ENCODE measurements at regions of chr16 and their contacts with region 1.

Region 1: GRCh38 chr16:4734063-4734729 is at the starts of genes ANKS3 and DNAAF8:
- DNase-seq: peak; percentile 57 to 90 (median 72)
- ATAC-seq: peak; percentile 76
- H3K4me3 ChIP-seq: peak within 1 kb of the TSS; percentile 99
- H3K4me3 Mint-ChIP-seq: peak within 1 kb of the TSS; percentile 98
- H3K27ac ChIP-seq: peak within 1 kb of the TSS; percentile 68 to 85
- H3K27ac Mint-ChIP-seq: peak within 1 kb of the TSS; percentile 90
- H3K4me1 ChIP-seq: peaks cover 21% of the 10 kb centered on the region
- H3K4me1 Mint-ChIP-seq: peaks cover 31% of the 10 kb centered on the region
- H3K27me3 ChIP-seq: no peaks in the 10 kb centered on the region
- H3K27me3 Mint-ChIP-seq: no peaks in the 10 kb centered on the region
- CTCF ChIP-seq: no peak
- total RNA-seq, gene ANKS3: 13.5 TPM
- total RNA-seq, gene DNAAF8: 0.25 TPM in 1 of 2 experiments, not detected in the other

Region 2: GRCh38 chr16:4766874-4767628 is 32.9 kb after region 1 on chr16 and contains the start of gene ZNF500:
- CTCF ChIA-PET with region 1: no interaction called
- POLR2A ChIA-PET with region 1: interaction called, 61 read pairs
- intact Hi-C with region 1: loop called (anchors 1 to 2 kb)
- DNase-seq: peak; percentile 90 to 99 (median 96)
- ATAC-seq: peak; percentile 90
- H3K4me3 ChIP-seq: peak within 1 kb of the TSS; percentile 80
- H3K4me3 Mint-ChIP-seq: peak within 1 kb of the TSS; percentile 96
- H3K27ac ChIP-seq: peak within 1 kb of the TSS; percentile 52 to 69
- H3K27ac Mint-ChIP-seq: peak within 1 kb of the TSS; percentile 90
- H3K4me1 ChIP-seq: peaks cover 41% of the 10 kb centered on the region
- H3K4me1 Mint-ChIP-seq: peaks cover 32% of the 10 kb centered on the region
- H3K27me3 ChIP-seq: no peaks in the 10 kb centered on the region
- H3K27me3 Mint-ChIP-seq: no peaks in the 10 kb centered on the region
- CTCF ChIP-seq: no peak
- total RNA-seq, gene ZNF500: 11.8 to 12.4 TPM

Region 3: DNA sequence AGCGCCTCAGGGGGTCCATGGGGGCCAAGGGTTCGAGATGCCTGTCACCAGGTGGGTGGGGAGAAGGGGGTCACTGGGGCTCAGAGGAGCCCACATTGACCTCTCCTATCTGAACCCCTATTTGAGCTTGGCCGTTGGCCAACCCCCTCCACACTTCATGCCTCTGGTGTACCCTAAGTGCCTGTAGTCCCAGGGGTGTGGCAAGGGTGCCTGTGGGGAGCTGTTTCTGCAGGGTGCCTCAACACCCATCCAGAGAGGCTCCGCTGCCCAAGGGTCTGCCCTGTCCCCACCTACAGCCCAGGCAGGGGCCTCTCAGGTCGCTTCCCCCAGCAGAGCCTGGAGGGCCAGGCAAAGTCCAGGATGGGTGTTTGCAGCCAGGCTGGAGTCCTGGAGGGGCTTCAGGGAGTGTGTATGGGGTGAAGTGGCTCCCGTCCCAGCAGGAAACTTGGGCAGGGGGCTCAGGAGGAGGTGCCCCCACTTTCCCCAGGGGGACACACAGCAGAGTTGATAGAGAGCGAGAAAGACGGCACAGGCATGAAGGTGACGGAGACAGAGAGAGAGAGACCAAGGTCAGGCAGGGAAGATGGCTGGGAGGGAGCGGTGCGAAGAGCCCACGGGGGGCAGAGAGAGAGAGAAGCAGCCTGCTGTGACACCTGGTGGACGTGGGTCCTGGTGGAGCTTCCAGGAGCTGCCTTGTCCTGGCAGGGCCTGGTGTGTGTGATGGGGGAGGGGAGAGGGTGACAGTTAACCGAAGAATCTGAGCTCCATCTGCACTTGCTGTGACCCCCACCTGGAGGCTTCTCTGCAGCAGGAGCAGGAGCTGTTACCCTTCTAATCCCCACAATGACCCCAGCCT is 53.7 kb after region 1 on chr16 and contains the start of gene SEPTIN12:
- CTCF ChIA-PET with region 1: no interaction called
- POLR2A ChIA-PET with region 1: no interaction called
- intact Hi-C with region 1: no loop called
- DNase-seq: no peak
- ATAC-seq: no peak
- H3K4me3 ChIP-seq: no peak within 1 kb of the TSS
- H3K4me3 Mint-ChIP-seq: no peak within 1 kb of the TSS
- H3K27ac ChIP-seq: no peak within 1 kb of the TSS
- H3K27ac Mint-ChIP-seq: no peak within 1 kb of the TSS
- H3K4me1 ChIP-seq: no peaks in the 10 kb centered on the region
- H3K4me1 Mint-ChIP-seq: no peaks in the 10 kb centered on the region
- H3K27me3 ChIP-seq: no peaks in the 10 kb centered on the region
- H3K27me3 Mint-ChIP-seq: no peaks in the 10 kb centered on the region
- CTCF ChIP-seq: no peak
- total RNA-seq, gene SEPTIN12: not detected

Region 4: GRCh38 chr16:4802659-4803287 is 68.6 kb after region 1 on chr16:
- CTCF ChIA-PET with region 1: interaction called, 3 read pairs
- POLR2A ChIA-PET with region 1: interaction called, 38 read pairs
- intact Hi-C with region 1: loop called (anchors 1 to 2 kb)
- DNase-seq: peak; percentile 76 to 93 (median 88)
- ATAC-seq: peak; percentile 83
- H3K4me3 ChIP-seq: peak overlapping the region; percentile 61
- H3K4me3 Mint-ChIP-seq: peak overlapping the region; percentile 92
- H3K27ac ChIP-seq: peak overlapping the region in 1 of 2 donors; percentile 56
- H3K27ac Mint-ChIP-seq: peak overlapping the region; percentile 96
- H3K4me1 ChIP-seq: peaks cover 24% of the 10 kb centered on the region
- H3K4me1 Mint-ChIP-seq: peaks cover 22% of the 10 kb centered on the region
- H3K27me3 ChIP-seq: no peaks in the 10 kb centered on the region
- H3K27me3 Mint-ChIP-seq: no peaks in the 10 kb centered on the region
- CTCF ChIP-seq: no peak

Region 5: DNA sequence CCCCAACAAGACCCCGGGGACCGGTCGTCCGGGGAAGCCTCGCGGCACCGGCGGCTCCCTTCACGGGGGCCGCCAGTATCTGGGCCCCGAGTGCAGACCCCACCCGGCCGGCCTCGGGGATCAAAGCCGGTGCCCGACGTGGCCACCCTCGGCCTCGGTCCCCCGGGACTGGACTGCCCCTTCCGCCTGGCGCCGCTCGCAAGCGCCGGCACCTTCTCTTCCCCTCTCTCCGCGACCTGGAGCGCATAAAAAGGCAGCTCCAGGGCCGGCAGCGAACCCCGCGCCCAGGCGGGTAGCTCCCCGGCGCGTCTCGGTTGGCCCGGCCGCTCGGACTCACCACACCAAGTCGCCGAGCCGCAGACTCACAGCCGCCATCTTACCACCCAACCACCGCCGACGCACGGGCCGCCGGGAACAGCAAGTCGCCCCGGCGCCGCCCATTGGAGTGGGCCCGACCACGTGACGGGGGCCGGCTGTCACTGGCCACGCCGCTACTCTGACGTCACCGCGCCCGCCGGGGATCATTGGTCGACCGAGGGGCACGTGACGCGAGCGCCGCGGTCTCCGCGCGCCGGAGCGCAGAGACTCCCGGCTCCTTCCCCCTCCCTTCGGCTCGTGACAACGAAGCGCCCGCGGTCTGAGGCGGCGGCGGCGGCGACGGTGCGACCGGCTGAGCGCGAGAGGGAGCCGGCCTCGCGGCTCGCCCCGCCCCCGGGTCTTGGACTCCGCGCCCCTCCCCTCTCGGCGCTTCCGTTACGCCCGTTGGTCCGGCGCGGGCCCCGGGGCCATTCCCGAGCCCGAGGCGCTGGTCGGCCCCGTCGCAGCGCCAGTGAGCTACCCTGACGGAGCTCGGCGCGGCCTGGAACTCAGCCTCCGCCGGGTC is 112.9 kb after region 1 on chr16 and contains the starts of genes GLYR1 and UBN1:
- CTCF ChIA-PET with region 1: no interaction called
- POLR2A ChIA-PET with region 1: interaction called, 14 read pairs
- intact Hi-C with region 1: loop called in 1 of 2 experiments (anchors 1 kb)
- DNase-seq: peak; percentile 98 to 100 (median 99)
- ATAC-seq: peak; percentile 90
- H3K4me3 ChIP-seq: peak within 1 kb of the TSS; percentile 95
- H3K4me3 Mint-ChIP-seq: peak within 1 kb of the TSS; percentile 93
- H3K27ac ChIP-seq: peak within 1 kb of the TSS; percentile 75 to 93
- H3K27ac Mint-ChIP-seq: peak within 1 kb of the TSS; percentile 85
- H3K4me1 ChIP-seq: peaks cover 46% of the 10 kb centered on the region
- H3K4me1 Mint-ChIP-seq: peaks cover 57% of the 10 kb centered on the region
- H3K27me3 ChIP-seq: no peaks in the 10 kb centered on the region
- H3K27me3 Mint-ChIP-seq: no peaks in the 10 kb centered on the region
- CTCF ChIP-seq: no peak
- total RNA-seq, gene GLYR1: 71.7 to 77.2 TPM
- total RNA-seq, gene UBN1: 45.7 to 45.8 TPM

Region 6: GRCh38 chr16:4957720-4958509 is 223.7 kb after region 1 on chr16 and contains the start of gene SEC14L5:
- CTCF ChIA-PET with region 1: no interaction called
- POLR2A ChIA-PET with region 1: no interaction called
- intact Hi-C with region 1: loop called in 1 of 2 experiments (anchors 10 kb)
- DNase-seq: peak; percentile 79 to 95 (median 89)
- ATAC-seq: peak; percentile 93
- H3K4me3 ChIP-seq: peak within 1 kb of the TSS; percentile 52
- H3K4me3 Mint-ChIP-seq: peak within 1 kb of the TSS; percentile 86
- H3K27ac ChIP-seq: no peak within 1 kb of the TSS
- H3K27ac Mint-ChIP-seq: no peak within 1 kb of the TSS
- H3K4me1 ChIP-seq: peaks cover 26% of the 10 kb centered on the region
- H3K4me1 Mint-ChIP-seq: peaks cover 24% of the 10 kb centered on the region
- H3K27me3 ChIP-seq: peaks cover 13 to 16% of the 10 kb centered on the region in 2 experiments
- H3K27me3 Mint-ChIP-seq: peaks cover 53% of the 10 kb centered on the region
- CTCF ChIP-seq: no peak
- total RNA-seq, gene SEC14L5: not detected

Region 7: GRCh38 chr16:5033256-5034169 is 299.3 kb after region 1 on chr16 and contains the start of gene NAGPA:
- CTCF ChIA-PET with region 1: no interaction called
- POLR2A ChIA-PET with region 1: interaction called, 4 read pairs
- intact Hi-C with region 1: loop called in 1 of 2 experiments (anchors 10 kb)
- DNase-seq: peak; percentile 72 to 90 (median 80)
- ATAC-seq: peak; percentile 90
- H3K4me3 ChIP-seq: peak within 1 kb of the TSS; percentile 73
- H3K4me3 Mint-ChIP-seq: peak within 1 kb of the TSS; percentile 86
- H3K27ac ChIP-seq: peak within 1 kb of the TSS; percentile 39 to 68
- H3K27ac Mint-ChIP-seq: peak within 1 kb of the TSS; percentile 84
- H3K4me1 ChIP-seq: peaks cover 19% of the 10 kb centered on the region
- H3K4me1 Mint-ChIP-seq: peaks cover 20% of the 10 kb centered on the region
- H3K27me3 ChIP-seq: no peaks in the 10 kb centered on the region
- H3K27me3 Mint-ChIP-seq: no peaks in the 10 kb centered on the region
- CTCF ChIP-seq: no peak
- total RNA-seq, gene NAGPA: 30.0 to 34.0 TPM

Region 8: GRCh38 chr16:5071681-5072333 is 337.6 kb after region 1 on chr16 and contains the start of gene ALG1:
- CTCF ChIA-PET with region 1: no interaction called
- POLR2A ChIA-PET with region 1: no interaction called
- intact Hi-C with region 1: loop called in 1 of 2 experiments (anchors 10 kb)
- DNase-seq: peak; percentile 83 to 95 (median 87)
- ATAC-seq: peak; percentile 91
- H3K4me3 ChIP-seq: peak within 1 kb of the TSS; percentile 78
- H3K4me3 Mint-ChIP-seq: peak within 1 kb of the TSS; percentile 97
- H3K27ac ChIP-seq: peak within 1 kb of the TSS; percentile 83 to 91
- H3K27ac Mint-ChIP-seq: peak within 1 kb of the TSS; percentile 96
- H3K4me1 ChIP-seq: peaks cover 24% of the 10 kb centered on the region
- H3K4me1 Mint-ChIP-seq: peaks cover 35% of the 10 kb centered on the region
- H3K27me3 ChIP-seq: no peaks in the 10 kb centered on the region
- H3K27me3 Mint-ChIP-seq: no peaks in the 10 kb centered on the region
- CTCF ChIP-seq: no peak
- total RNA-seq, gene ALG1: 8.9 to 9.0 TPM

Measured in CD4-positive, alpha-beta T cell (primary cell).